Lower leg skin (tissue), 4 donors: ENCODE measurements at regions of chr19 and their contacts with region 1.

Region 1: DNA sequence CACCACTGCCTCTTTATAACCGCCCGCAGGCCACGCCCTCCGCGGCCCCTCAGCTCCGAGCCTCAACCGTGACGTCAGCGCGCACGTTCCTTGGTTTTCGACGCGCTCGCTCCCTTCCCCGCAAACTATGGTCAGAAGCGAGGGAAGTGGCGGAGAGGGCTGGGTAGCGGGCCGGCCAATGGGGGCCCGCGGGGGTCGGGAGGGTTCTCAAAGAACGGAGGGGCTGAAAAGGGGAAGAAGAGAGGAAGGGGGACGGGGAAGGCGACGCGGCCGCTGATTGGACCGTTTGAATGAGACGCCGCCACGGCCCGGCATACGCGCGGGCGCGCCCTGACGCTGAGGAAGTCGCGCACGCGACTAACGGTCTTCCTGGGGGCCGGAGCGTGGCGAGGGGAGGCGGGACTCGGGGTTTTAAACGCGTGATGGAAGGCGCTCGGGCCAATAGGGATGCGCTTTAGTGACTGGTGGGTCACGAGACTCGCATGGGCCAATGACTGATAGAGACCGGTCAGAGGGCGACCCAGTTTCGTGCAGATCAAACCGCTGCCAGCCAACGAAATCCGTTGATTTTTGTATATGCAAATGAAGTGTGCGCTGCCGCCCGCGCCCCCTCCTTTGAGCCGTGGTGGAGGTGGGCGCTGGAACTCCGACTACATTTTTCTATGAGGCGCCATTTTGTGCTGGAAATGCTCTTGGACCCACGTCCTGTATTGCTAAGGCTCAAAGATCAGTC is 378 bp upstream of the UBE2S start:
- DNase-seq: peak; percentile 99 to 100
- H3K4me3 ChIP-seq: peak overlapping the region; percentile 74
- CTCF ChIP-seq: no peak
- POLR2A ChIP-seq: no peak

Region 2: DNA sequence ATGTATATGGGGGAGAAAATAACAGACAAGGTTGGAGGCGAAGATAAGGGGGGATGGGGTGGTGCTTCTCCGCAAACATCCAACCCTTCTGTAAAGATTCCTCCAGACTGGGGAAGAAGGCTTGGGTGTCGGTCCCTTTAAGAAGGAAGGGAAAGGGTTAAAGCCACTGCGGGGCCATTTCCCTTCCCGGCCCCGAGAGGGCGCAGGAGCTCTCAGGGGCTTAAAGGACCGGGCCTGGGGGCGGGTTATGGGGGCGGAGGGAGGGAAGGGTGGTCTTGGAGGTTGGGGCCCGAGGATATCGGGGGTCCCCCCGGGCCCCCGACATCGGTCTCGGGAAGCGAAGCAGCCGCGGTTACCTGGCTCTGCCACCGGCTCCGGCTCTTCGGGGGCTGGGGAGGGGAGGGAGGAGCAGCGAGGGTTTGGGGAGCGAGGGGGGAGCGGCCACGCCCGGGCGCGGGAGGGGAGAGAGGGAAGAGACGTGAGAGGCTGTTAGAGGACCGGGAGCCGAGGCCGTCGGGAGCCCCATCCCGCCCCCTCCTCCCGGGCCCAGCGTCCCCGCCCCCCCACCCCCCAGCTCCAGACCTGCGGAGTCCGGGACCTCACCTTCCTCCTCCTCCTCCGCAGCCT is 261.8 kb before region 1 on chr19:
- intact Hi-C with region 1: no loop called
- DNase-seq: no peak
- H3K4me3 ChIP-seq: no peak overlapping the region
- CTCF ChIP-seq: no peak
- POLR2A ChIP-seq: no peak

Region 3: GRCh38 chr19:55643348-55644176 is 235.6 kb after region 1 on chr19 and contains the start of gene ZNF581:
- intact Hi-C with region 1: loop called (anchors 5 kb)
- DNase-seq: peak; percentile 70 to 95
- H3K4me3 ChIP-seq: peak within 1 kb of the TSS; percentile 49
- CTCF ChIP-seq: no peak
- POLR2A ChIP-seq: no peak
- total RNA-seq, gene ZNF581: 20.1 to 27.3 (median 22.8) TPM